GM10248 (cell line): ENCODE measurements at regions of chr6 and their contacts with region 1.

Region 1: DNA sequence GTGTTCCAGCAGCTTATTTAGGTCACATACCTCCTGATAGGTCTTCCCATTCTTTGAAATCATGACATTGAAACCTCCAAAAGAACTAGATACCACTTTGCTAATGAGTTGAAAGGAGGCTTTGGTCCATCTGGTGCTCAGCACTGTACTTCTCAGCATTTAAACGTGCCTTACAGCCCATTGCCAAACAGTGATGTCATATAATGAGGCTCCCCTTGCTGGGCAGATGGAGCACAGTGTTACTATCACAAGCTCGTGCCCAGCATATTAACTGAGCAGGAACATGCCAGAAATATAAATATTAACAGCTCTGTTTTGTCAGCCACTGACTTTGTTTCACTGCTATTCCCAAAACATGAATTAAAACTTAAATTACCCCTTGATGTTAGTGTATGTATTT is 25.5 kb upstream of the MAPK13 start:
- DNase-seq: no peak
- CTCF ChIP-seq: no peak

Region 2: GRCh38 chr6:36027501-36028087 is 77.2 kb before region 1 on chr6 and contains the start of gene MAPK14:
- CTCF ChIA-PET with region 1: interaction called, 13 read pairs
- POLR2A ChIA-PET with region 1: no interaction called
- DNase-seq: peak; percentile 98
- CTCF ChIP-seq: peak; percentile 87